Right ventricle myocardium inferior (tissue), 1 donor: ENCODE measurements at regions of chrX and their contacts with region 1.

Region 1: DNA sequence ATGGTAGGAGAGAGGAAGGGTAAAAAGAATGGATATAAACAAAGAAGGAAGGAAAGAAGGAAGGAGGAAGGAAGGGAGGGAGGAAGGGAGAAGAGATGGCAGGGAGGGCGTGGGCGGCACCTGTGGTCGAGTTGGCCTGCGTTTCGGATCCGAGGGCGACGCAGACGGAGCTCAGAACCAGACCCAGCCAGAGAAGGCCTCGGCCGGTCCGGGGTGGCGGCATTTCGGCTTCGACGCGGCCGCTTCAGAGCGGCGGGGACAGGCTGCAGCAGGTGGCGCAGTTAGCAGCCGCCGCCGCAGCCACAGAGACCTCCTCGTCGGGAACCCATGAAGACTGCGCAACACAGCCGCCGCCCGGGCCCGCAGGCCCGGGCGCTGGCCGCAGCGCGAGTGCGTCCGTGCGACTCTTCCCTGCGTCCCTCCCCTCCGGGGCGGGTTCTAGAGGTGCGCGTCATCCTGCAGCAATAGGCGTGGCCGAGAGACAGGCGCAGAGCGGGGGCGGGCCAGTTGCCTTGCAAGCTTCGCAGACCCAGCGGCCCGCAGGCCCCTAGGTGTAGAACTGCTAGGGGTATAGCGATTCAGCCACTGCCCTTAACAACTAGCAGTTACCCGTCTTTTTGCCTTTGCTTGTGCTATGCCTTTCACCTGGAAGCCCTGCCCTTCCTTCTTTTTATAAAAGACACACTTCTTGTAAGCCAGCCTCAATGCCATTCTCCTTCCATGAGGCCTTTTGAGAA is at the start of gene IDS:
- DNase-seq: peak; percentile 95
- ATAC-seq: peak; percentile 98
- total RNA-seq, gene IDS: 77.6 TPM

Region 2: GRCh38 chrX:149539283-149540130 is 34.4 kb after region 1 on chrX:
- intact Hi-C with region 1: loop called (anchors 2 kb)
- DNase-seq: peak; percentile 93
- ATAC-seq: peak; percentile 76